ENCODE measurements at regions of chr19 and their contacts with region 1.

Region 1: GRCh38 chr19:12139885-12140547 is at the start of gene ZNF20:
- DNase-seq: peak; percentile 99
- ATAC-seq: peak; percentile 93
- H3K4me3 Mint-ChIP-seq: peak within 1 kb of the TSS; percentile 94
- H3K27ac Mint-ChIP-seq: peak within 1 kb of the TSS; percentile 98
- H3K4me1 Mint-ChIP-seq: peaks cover 30% of the 10 kb centered on the region
- H3K27me3 Mint-ChIP-seq: no peaks in the 10 kb centered on the region
- CTCF ChIP-seq: no peak
- total RNA-seq, gene ZNF20: 5.0 to 9.1 TPM (median 7.8 TPM) in 3 replicates

Region 2: DNA sequence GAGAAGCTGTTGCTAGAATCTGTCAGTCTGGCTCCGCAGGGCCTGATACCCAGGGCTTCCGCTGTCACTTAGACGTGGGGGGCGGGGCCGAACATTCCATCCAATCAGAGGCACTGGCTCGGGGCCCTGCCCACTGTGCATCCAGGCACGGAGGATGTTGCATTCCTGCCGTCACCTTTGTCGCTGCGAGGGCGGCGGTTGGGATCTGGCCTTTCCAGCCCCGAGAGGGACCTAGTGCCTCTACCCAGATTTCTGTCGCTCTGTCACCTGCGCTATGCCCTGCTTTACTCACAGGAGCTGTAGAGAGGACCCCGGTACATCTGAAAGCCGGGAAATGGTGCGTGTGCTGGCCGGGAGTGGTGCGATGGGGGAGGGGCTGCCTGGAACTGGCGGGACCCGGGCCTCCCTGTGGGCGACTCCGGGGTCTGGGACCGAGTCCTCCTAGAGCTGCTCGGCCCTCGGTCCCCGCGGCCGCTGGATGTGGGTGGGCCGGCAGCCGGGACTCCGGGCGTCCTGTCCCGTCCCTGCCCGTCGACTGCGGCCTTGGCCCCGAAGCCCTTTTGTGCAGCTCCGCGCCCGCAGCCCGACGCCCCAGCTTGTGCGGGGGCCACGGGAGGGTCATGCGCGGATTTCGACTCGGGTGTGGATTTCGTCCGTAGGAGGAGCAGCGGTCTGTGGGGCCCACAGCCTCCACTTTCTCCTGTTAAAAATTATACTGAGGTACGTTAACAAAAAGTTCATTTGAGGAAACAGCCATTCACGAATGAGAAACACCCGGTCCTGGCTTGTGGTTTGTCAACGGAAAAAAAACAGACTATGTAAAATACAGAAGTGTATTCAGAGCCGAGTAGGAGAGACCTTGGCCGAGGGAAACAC is 291.2 kb before region 1 on chr19 and contains the start of gene ZNF439:
- CTCF ChIA-PET with region 1: interaction called, 10 read pairs
- POLR2A ChIA-PET with region 1: interaction called, 6 read pairs
- DNase-seq: peak; percentile 94
- ATAC-seq: peak; percentile 95
- H3K4me3 Mint-ChIP-seq: peak within 1 kb of the TSS; percentile 80
- H3K27ac Mint-ChIP-seq: peak within 1 kb of the TSS; percentile 88
- H3K4me1 Mint-ChIP-seq: peaks cover 24% of the 10 kb centered on the region
- H3K27me3 Mint-ChIP-seq: peaks cover 20% of the 10 kb centered on the region
- CTCF ChIP-seq: no peak
- total RNA-seq, gene ZNF439: 5.7 to 8.5 TPM (median 7.2 TPM) in 3 replicates

Region 3: GRCh38 chr19:11964858-11965645 is 175.0 kb before region 1 on chr19 and contains the start of gene ZNF763:
- CTCF ChIA-PET with region 1: interaction called, 20 read pairs
- POLR2A ChIA-PET with region 1: interaction called, 4 read pairs
- DNase-seq: peak; percentile 99
- ATAC-seq: peak; percentile 92
- H3K4me3 Mint-ChIP-seq: peak within 1 kb of the TSS; percentile 82
- H3K27ac Mint-ChIP-seq: peak within 1 kb of the TSS; percentile 96
- H3K4me1 Mint-ChIP-seq: peaks cover 22% of the 10 kb centered on the region
- H3K27me3 Mint-ChIP-seq: peaks cover 20% of the 10 kb centered on the region
- CTCF ChIP-seq: no peak
- total RNA-seq, gene ZNF763: 2.4 to 3.1 TPM (median 2.9 TPM) in 3 replicates

Region 4: DNA sequence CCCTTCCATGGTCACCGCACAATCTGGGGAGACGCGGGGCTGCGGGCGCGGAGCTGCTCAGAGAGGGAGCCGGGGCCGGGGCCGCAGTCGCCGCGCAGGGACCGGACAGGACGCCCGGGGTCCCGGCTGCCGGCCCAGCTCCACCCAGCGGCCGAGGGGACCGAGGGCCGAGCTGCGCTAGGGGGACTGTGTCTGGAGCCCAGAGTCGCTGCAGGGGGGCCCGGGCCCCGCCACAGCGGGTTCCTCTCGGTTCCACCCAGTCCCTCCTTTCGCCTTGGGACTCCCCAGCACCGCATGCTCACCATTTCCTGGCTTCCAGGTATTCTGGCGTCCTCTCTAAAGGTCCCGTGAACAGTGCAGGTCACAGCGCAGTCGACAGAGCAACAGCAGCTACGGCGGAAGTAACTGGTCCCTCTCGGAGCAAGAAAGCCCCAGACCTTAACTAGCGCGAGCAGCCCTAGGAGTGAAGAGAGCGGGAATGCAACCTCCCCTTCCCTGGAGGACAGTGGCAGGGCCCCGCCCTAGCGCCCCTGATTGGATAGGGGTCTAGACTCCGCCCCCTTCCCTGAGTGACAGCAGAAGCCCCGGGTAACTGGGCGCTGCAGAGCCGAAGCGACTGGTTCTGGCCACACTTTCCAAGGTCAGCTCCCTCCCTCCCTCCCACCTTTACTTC is 87.4 kb before region 1 on chr19 and contains the start of gene ZNF878:
- CTCF ChIA-PET with region 1: interaction called, 11 read pairs
- POLR2A ChIA-PET with region 1: interaction called, 8 read pairs
- DNase-seq: peak; percentile 99
- ATAC-seq: peak; percentile 98
- H3K4me3 Mint-ChIP-seq: peak within 1 kb of the TSS; percentile 91
- H3K27ac Mint-ChIP-seq: peak within 1 kb of the TSS; percentile 98
- H3K4me1 Mint-ChIP-seq: peaks cover 18% of the 10 kb centered on the region
- H3K27me3 Mint-ChIP-seq: peaks cover 2% of the 10 kb centered on the region; the same call in 1 of the 2 replicates
- CTCF ChIP-seq: no peak
- total RNA-seq, gene ZNF878: 10.1 to 12.5 TPM (median 10.7 TPM) in 3 replicates

Region 5: DNA sequence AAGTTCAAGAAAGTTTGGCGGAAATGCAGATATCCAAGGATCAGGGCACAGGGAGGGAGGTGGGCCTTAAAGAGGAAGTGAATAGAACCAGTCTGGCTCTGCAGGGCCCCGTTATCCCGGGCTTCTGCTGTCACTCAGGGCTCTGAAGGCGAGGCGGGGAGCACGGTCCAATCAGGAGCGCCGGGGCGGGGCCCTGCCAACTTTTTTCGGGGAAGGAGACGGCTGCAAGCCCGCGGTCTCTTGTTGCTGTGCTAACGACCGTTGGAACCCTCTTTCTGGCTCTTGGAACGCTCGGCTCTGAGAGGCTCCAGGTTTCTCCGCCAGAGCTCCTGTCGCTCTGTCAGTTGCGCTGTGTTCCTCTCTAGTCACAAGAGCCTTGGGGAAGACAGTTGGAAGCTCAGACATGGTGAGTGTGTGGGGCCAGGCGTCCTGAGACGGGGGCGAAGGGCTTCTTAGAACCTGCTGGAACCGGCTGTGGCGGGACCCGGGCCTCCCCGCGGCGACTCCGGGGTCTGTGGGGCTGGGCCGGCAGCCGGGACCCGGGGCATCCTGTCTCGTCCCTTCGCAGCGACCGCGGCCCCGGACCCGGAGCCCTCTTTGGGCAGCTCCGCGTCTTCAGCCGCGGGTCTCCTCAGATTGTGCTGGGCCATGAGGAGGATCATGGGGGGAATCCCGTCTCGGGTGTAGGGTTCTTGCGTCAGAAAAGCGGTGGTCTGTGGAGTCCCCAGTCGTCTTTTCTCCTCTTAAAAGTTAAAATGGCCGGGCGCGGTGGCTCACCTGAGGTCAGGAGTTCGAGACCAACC is 47.8 kb before region 1 on chr19:
- CTCF ChIA-PET with region 1: interaction called, 84 read pairs
- POLR2A ChIA-PET with region 1: interaction called, 17 read pairs
- DNase-seq: peak; percentile 94
- ATAC-seq: peak; percentile 98
- H3K4me3 Mint-ChIP-seq: peak overlapping the region; percentile 89
- H3K27ac Mint-ChIP-seq: peak overlapping the region; percentile 97
- H3K4me1 Mint-ChIP-seq: peaks cover 12% of the 10 kb centered on the region
- H3K27me3 Mint-ChIP-seq: no peaks in the 10 kb centered on the region
- CTCF ChIP-seq: no peak

Region 6: DNA sequence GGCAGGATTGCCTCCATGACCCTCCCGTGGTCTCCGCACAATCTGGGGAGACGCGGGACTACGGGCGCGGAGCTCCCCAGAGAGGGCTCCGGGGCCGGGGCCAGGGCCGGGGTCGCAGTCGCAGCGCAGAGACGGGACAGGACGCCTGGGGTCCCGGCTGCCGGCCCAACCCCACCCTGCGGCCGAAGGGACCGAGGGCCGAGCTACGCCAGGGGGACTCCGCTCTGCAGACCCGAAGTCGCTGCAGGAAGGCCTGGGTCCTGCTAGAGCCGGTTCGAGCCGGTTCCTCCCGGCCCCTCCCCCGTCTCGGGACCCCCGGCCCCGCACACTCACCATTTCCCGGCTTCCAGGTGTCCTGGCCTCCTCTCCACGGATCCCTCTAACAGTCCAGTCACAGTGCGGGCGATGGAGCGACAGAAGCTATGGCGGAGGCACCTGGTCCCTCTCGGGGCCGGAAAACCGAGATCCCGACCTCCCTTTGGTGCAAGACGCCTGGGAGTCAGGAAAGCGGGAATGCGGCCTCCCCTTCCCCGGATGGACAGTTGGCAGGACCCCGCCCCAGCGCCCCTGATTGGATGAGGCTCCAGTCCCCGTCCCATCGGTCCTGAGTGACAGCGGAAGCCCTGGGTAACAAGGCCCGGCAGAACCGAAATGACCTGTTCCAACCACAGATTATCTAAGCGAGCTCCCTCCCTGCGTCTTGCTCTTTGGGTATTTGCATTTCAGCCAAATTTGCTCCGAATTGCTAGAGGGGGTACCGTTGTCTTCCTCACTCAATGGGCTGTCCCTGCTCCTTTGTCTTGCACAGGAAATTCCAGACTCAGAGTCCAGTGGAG is 16.4 kb after region 1 on chr19 and contains the start of gene ZNF625:
- CTCF ChIA-PET with region 1: interaction called, 18 read pairs
- POLR2A ChIA-PET with region 1: interaction called, 15 read pairs
- DNase-seq: peak; percentile 97
- ATAC-seq: peak; percentile 97
- H3K4me3 Mint-ChIP-seq: peak within 1 kb of the TSS; percentile 91
- H3K27ac Mint-ChIP-seq: peak within 1 kb of the TSS; percentile 95
- H3K4me1 Mint-ChIP-seq: peaks cover 12% of the 10 kb centered on the region
- H3K27me3 Mint-ChIP-seq: peaks cover 5% of the 10 kb centered on the region
- CTCF ChIP-seq: no peak
- total RNA-seq, gene ZNF625: 23.9 to 26.0 TPM (median 24.5 TPM) in 3 replicates